CD4-positive, alpha-beta memory T cell (primary cell): ENCODE measurements at regions of chr1 and their contacts with region 1.

Region 1: DNA sequence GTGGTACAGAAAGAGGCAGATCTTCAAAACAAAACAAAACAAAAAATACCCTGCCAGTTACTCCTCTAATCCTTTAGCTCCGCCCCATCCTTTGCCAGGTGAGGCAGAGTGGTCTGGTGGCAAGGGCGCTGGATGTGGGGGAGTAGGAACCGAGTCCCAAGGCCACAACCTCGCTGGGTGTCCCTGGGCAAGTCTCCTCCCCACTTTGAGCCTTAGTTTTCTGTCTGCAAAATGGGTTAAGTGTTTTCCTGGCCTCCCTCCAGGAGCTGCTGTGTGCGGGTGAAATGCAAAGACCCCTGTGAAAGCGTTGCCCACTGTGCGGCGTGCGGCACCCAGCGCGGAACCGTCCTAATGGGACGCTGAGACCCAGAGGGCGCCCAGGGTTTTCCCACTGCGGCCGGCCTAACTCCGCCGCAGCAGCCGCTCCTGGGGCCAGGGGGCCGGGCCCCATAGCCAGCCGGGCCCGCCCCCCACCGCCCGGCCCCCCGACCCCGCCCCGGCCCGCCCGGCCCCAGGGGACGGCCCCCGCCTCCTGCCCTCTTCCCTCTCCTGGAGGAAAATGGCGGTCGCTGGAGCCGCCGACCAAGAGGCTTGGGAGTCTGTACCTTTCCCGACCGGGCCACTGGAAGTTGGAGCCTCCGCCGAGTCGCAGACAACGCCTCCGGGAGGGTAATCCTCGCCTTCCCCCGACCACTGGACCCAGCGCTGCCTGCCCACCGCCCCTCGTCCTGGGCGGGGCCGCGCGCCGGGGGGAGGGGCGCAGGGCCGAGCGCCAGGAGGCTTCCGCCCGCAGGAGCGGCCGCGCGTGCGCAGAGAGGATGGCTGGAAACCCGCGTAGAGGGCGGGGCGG is at the starts of genes ERMAP and SVBP:
- DNase-seq: peak; percentile 88 to 97 (median 92)
- H3K4me3 ChIP-seq: peak within 1 kb of the TSS; percentile 43 to 74
- H3K4me3 Mint-ChIP-seq: peak within 1 kb of the TSS; percentile 82 to 93 (median 86)
- H3K27ac ChIP-seq: peak within 1 kb of the TSS; percentile 87
- H3K27ac Mint-ChIP-seq: peak within 1 kb of the TSS; percentile 86 to 96 (median 94)
- H3K4me1 ChIP-seq: peaks cover 17% of the 10 kb centered on the region
- H3K4me1 Mint-ChIP-seq: peaks cover 19 to 32% (median 27%) of the 10 kb centered on the region in 4 donors
- H3K27me3 ChIP-seq: no peaks in the 10 kb centered on the region
- H3K27me3 Mint-ChIP-seq: no peaks in the 10 kb centered on the region
- total RNA-seq, gene ERMAP: 6.5 to 8.6 TPM
- total RNA-seq, gene SVBP: 20.4 to 23.5 TPM

Region 2: DNA sequence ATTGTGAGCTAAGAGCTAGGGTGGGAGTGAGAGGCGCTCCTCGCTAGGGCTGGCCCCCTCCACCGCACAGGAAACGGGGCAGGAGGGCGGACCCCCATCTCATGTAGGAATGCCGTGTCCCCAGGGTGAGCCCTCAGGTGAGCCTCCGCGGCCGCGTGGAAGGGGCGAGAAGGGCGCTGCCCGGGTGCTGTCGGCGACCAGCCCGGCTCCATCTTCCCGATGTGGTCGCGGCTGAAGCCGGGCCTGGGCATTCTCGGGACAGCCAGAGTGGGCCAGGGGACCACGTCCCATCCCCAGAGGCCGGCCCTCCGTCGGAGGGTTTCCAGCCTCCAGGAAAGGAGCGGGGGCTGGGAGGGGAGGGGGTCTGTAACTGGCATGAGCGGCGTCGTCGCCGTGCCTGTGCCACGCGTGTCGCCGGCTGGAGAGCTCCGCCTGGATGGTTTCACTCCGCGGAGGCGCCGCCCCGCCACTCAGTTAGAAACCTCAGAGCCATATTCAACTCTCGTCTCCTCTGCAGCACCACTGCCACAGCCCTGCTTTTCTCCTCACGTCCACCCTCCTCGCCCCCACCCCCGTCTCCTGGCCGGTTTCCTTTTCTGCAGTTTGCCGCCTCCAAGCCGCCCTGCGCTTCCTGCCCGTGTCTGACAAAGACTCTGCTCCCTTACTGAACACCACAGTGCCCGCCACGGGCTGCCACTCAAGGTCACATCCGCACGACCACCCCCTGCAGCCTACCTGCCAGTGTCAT is 31.7 kb before region 1 on chr1 and contains the start of gene TMEM269:
- CTCF ChIA-PET with region 1: interaction called, 4 read pairs
- POLR2A ChIA-PET with region 1: interaction called, 10 read pairs
- intact Hi-C with region 1: no loop called
- DNase-seq: peak; percentile 35 to 66 (median 40)
- H3K4me3 ChIP-seq: peak within 1 kb of the TSS; percentile 6 to 51
- H3K4me3 Mint-ChIP-seq: peak within 1 kb of the TSS; percentile 85 to 94 (median 88)
- H3K27ac ChIP-seq: peak within 1 kb of the TSS; percentile 8
- H3K27ac Mint-ChIP-seq: peak within 1 kb of the TSS; percentile 43 to 90 (median 87)
- H3K4me1 ChIP-seq: peaks cover 14% of the 10 kb centered on the region
- H3K4me1 Mint-ChIP-seq: peaks cover 8 to 23% (median 13%) of the 10 kb centered on the region in 4 donors
- H3K27me3 ChIP-seq: no peaks in the 10 kb centered on the region
- H3K27me3 Mint-ChIP-seq: no peaks in the 10 kb centered on the region
- total RNA-seq, gene TMEM269: 0.35 to 0.36 TPM

Region 3: DNA sequence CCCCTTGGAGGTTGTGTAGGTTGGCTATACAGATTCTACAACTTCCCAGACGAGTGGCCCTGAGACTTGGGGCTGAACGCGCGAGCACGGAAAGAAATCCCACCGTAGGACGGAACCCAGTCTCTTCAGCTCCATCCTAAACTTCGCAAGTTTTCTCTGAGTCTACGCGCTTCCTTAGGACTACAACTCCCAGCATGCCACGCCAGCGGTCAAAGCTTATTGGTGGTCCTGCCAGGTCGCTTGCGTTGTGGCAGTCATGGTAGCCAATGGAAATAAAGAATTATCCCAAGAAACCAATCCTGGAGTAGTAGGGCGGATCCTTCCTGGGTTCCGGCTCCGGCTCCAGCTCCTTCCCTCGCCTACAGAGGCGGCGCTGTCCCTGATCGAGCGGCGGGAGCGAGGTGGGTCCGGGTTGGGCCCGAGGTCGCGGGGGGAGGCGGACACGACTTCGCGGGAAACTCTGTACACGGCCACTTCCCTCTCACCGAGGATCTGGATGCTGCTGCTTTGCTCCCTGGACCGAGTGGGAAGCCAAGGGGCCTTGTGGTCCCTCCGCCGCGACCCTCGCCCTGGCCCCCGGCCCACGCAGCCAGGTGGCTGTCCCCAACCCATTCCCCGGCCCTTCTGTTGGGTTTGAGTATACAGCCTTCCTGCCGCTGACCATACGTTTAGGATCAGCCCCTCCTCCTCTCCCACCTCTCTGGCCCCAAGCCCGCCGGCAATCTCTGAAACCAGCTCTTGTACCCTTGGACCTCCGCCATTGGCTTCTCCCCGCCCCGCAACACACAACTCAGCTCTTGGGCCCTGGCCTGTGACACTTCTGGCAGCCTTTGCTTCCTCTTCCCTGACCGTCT is 29.7 kb after region 1 on chr1 and contains the start of gene ZNF691:
- CTCF ChIA-PET with region 1: interaction called, 6 read pairs
- POLR2A ChIA-PET with region 1: interaction called, 38 read pairs
- intact Hi-C with region 1: loop called (anchors 1 kb)
- DNase-seq: peak; percentile 88 to 94 (median 89)
- H3K4me3 ChIP-seq: peak within 1 kb of the TSS; percentile 74 to 84
- H3K4me3 Mint-ChIP-seq: peak within 1 kb of the TSS; percentile 91 to 98 (median 96)
- H3K27ac ChIP-seq: peak within 1 kb of the TSS; percentile 72
- H3K27ac Mint-ChIP-seq: peak within 1 kb of the TSS; percentile 59 to 95 (median 86)
- H3K4me1 ChIP-seq: peaks cover 23% of the 10 kb centered on the region
- H3K4me1 Mint-ChIP-seq: peaks cover 27 to 38% (median 35%) of the 10 kb centered on the region in 4 donors
- H3K27me3 ChIP-seq: no peaks in the 10 kb centered on the region
- H3K27me3 Mint-ChIP-seq: no peaks in the 10 kb centered on the region
- total RNA-seq, gene ZNF691: 17.3 to 18.8 TPM

Region 4: GRCh38 chr1:42958488-42959319 is 141.9 kb after region 1 on chr1 and contains the start of gene SLC2A1:
- CTCF ChIA-PET with region 1: no interaction called
- POLR2A ChIA-PET with region 1: no interaction called
- intact Hi-C with region 1: loop called (anchors 2 kb)
- DNase-seq: peak; percentile 92 to 97 (median 95)
- H3K4me3 ChIP-seq: peak within 1 kb of the TSS; percentile 66 to 78
- H3K4me3 Mint-ChIP-seq: peak within 1 kb of the TSS; percentile 97 to 99 (median 98)
- H3K27ac ChIP-seq: peak within 1 kb of the TSS; percentile 76
- H3K27ac Mint-ChIP-seq: peak within 1 kb of the TSS; percentile 97 to 99 (median 98)
- H3K4me1 ChIP-seq: peaks cover 59% of the 10 kb centered on the region
- H3K4me1 Mint-ChIP-seq: peaks cover 35 to 79% (median 51%) of the 10 kb centered on the region in 4 donors
- H3K27me3 ChIP-seq: no peaks in the 10 kb centered on the region
- H3K27me3 Mint-ChIP-seq: no peaks in the 10 kb centered on the region
- total RNA-seq, gene SLC2A1: 57.5 to 58.4 TPM